Vagina (tissue), 2 donors: ENCODE measurements at regions of chr2 and their contacts with region 1.

Region 1: DNA sequence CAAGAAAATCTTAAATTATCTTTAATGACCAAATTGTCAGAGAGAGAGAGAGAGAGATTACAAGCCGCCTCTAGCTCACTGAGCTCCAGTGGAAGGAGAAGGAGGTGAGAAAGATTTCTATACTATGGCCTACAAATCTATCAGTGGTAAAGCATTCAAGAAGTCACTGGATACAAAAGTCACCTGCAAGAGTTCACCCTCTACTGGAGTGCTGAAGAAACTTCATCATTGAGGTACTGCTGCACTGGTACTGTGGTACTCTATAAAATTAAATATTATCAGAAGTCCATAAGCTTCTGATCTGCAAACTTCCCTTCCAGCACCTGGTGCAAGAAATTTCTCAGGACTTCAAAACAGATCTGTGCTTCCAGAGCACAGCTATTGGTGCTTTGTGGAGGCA is 48.3 kb upstream of the AGPS start:
- DNase-seq: no peak
- H3K4me3 ChIP-seq: no peak overlapping the region
- H3K27ac ChIP-seq: no peak overlapping the region
- H3K4me1 ChIP-seq: no peaks in the 10 kb centered on the region
- H3K27me3 ChIP-seq: no peaks in the 10 kb centered on the region
- CTCF ChIP-seq: no peak
- POLR2A ChIP-seq: no peak

Region 2: GRCh38 chr2:177229448-177230242 is 114.7 kb before region 1 on chr2:
- intact Hi-C with region 1: no loop called
- DNase-seq: no peak
- H3K4me3 ChIP-seq: no peak overlapping the region
- H3K27ac ChIP-seq: no peak overlapping the region
- H3K4me1 ChIP-seq: peaks cover 32% of the 10 kb centered on the region
- H3K27me3 ChIP-seq: no peaks in the 10 kb centered on the region
- CTCF ChIP-seq: no peak
- POLR2A ChIP-seq: no peak

Region 3: GRCh38 chr2:178628605-178629004 is 1284.3 kb after region 1 on chr2:
- intact Hi-C with region 1: loop called (anchors 5 kb)
- DNase-seq: no peak
- H3K4me3 ChIP-seq: no peak overlapping the region
- H3K27ac ChIP-seq: no peak overlapping the region
- H3K4me1 ChIP-seq: no peaks in the 10 kb centered on the region
- H3K27me3 ChIP-seq: no peaks in the 10 kb centered on the region
- CTCF ChIP-seq: no peak
- POLR2A ChIP-seq: no peak